ENCODE measurements at regions of chr20 and their contacts with region 1.

Region 1: GRCh38 chr20:62182613-62183425 is at the start of gene MTG2:
- DNase-seq: peak; percentile 91 to 96
- H3K4me3 ChIP-seq: peak within 1 kb of the TSS; percentile 93 to 94
- H3K27ac ChIP-seq: peak within 1 kb of the TSS; percentile 83 to 97
- H3K4me1 ChIP-seq: peaks cover 0 to 32% (median 22%) of the 10 kb centered on the region in 4 donors
- H3K27me3 ChIP-seq: no peaks in the 10 kb centered on the region
- CTCF ChIP-seq: no peak

Region 2: DNA sequence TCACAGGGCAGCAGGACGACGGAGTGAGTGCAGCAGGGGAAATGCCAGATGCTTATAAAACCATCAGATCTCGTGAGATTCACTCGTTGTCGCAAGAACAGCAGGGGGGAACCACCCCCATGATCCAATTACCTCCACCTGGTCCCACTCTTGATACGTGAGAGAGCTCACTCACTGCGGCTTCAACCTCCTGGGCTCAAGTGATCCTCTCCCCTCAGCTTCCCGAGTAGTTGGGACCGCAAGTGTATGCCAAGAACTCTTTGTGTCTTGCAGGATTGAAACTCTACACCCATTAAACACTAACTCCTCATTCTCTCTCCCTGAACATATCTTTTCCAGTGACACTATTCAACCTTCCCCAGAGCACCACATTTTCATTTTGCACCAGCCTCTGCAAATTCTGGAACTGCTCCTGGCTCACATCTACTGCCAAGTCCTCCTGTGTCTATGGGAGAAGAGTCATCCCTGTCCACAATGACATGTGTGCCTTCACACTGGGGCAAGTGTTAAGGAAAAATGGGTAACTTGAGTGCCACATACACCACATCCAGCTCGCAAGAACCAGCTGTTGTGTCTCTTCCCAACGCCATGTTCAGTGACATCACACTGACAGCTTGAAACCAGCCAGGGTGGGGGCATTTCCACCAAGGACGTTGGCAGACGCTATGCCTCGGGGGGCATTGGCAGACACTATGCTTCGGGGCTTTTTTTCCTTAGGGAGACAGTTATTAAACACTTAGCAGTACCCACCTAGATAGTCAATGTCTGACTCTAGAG is 102.4 kb before region 1 on chr20:
- intact Hi-C with region 1: no loop called
- DNase-seq: no peak
- H3K4me3 ChIP-seq: no peak overlapping the region
- H3K27ac ChIP-seq: no peak overlapping the region
- H3K4me1 ChIP-seq: no peaks in the 10 kb centered on the region
- H3K27me3 ChIP-seq: peaks cover 0 to 15% of the 10 kb centered on the region in 2 donors
- CTCF ChIP-seq: no peak

Region 3: GRCh38 chr20:62237801-62238571 is 55.2 kb after region 1 on chr20 and contains the start of gene OSBPL2:
- intact Hi-C with region 1: loop called (anchors 10 kb)
- DNase-seq: peak; percentile 99 to 100
- H3K4me3 ChIP-seq: peak within 1 kb of the TSS; percentile 79 to 93
- H3K27ac ChIP-seq: peak within 1 kb of the TSS; percentile 68 to 84
- H3K4me1 ChIP-seq: peaks cover 0 to 30% (median 16%) of the 10 kb centered on the region in 4 donors
- H3K27me3 ChIP-seq: peaks cover 0 to 35% of the 10 kb centered on the region in 2 donors
- CTCF ChIP-seq: no peak

Measured in tibial artery (tissue), 4 donors.